Adrenal gland (tissue), 19 donors: ENCODE measurements at regions of chr12 and their contacts with region 1.

Region 1: GRCh38 chr12:5003020-5003666 is 40.5 kb upstream of the KCNA5 start:
- DNase-seq: peak; percentile 35 to 85 (median 67)
- H3K4me3 ChIP-seq: no peak overlapping the region
- H3K27ac ChIP-seq: no peak overlapping the region
- H3K4me1 ChIP-seq: no peaks in the 10 kb centered on the region
- H3K27me3 ChIP-seq: no peaks in the 10 kb centered on the region
- CTCF ChIP-seq: peak; percentile 82 to 89 (median 86)
- POLR2A ChIP-seq: no peak

Region 2: DNA sequence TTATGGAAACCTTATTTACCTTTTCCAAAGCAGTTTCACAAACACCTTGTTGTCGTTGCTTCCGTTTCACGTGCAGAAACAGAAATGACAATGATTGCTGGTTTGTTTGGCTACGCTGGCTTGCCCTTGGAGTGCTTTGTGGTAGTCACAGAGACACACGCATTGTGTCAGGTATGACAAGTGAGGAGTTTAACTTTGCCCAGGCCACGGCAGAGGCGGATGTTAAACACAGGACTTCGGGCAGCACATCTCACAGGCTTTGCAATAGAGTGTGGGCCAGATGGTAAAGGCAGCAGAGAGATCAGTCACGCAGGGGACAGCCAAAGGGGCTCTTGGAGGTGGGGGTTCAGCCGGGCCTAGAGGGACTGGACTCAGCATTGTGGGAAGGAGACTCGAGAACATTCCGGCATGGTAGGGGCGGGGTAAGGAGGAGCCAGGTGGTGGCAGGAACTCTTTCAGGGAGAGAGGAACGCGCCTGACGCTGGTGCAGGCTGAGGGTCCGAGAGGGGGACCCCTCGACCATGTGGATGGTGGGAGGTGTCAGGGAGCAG is 153.3 kb before region 1 on chr12:
- intact Hi-C with region 1: loop called in 1 of 2 experiments (anchors 5 kb)
- DNase-seq: no peak
- H3K4me3 ChIP-seq: no peak overlapping the region
- H3K27ac ChIP-seq: no peak overlapping the region
- H3K4me1 ChIP-seq: no peaks in the 10 kb centered on the region
- H3K27me3 ChIP-seq: no peaks in the 10 kb centered on the region
- CTCF ChIP-seq: no peak
- POLR2A ChIP-seq: no peak

Region 3: GRCh38 chr12:4857472-4858291 is 145.5 kb before region 1 on chr12:
- intact Hi-C with region 1: loop called (anchors 2 to 5 kb)
- DNase-seq: peak; percentile 61 to 87 (median 75)
- H3K4me3 ChIP-seq: no peak overlapping the region
- H3K27ac ChIP-seq: no peak overlapping the region
- H3K4me1 ChIP-seq: no peaks in the 10 kb centered on the region
- H3K27me3 ChIP-seq: peaks cover 3% of the 10 kb centered on the region
- CTCF ChIP-seq: peak; percentile 66 to 83 (median 73)
- POLR2A ChIP-seq: no peak

Region 4: DNA sequence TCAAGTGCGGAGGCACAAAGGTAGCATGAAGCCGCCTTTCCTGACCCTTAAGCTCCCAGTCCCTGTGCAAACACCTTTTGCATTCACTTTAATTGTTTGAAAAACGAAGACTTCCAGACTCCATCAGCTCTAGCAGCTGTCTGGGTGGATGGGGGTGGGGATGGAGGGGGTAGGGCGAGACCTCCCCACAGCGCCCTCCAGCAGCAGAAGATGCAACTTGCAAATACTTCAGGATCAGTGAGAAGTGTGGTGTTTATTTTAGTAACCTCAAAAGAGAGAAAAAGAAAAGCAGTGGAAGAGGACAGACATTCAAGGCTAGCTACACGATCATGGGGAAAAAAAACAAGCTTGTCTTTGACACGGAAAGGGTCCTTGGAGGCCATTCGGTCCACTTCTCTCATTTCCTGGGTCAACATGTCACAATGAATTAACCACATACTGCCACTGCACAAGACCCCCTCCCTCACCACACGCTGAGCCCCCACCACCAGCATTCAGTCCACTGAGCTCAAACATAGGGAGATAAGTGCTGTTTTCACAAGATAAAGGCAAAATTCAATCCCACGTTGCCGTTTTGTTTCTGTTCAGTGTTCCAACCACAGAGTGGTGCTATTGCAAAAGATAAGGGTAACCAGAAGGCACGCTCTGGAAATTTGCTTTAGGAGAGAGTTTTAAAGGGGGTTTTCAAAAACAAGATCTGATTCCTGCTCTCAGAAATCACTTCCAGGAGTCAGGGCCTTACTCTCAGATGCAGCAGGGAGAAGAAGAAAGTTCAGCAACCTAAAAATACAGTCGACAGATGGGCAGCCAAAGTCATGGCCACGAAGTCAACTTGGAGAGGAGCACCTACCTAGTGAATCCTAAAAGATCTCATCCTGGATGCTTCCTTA is 425.4 kb after region 1 on chr12:
- intact Hi-C with region 1: no loop called
- DNase-seq: no peak
- H3K4me3 ChIP-seq: no peak overlapping the region
- H3K27ac ChIP-seq: no peak overlapping the region
- H3K4me1 ChIP-seq: peaks cover 0 to 11% of the 10 kb centered on the region in 2 donors
- H3K27me3 ChIP-seq: peaks cover 25% of the 10 kb centered on the region
- CTCF ChIP-seq: peak in 4 of 6 experiments; percentile 26 to 43 (median 36)
- POLR2A ChIP-seq: no peak